ENCODE measurements at regions of chr10 and their contacts with region 1.

Region 1: GRCh38 chr10:110746254-110746826 is 102.2 kb downstream of the RBM20 start:
- DNase-seq: peak; percentile 81
- H3K4me3 ChIP-seq: no peak overlapping the region
- H3K27ac ChIP-seq: no peak overlapping the region
- H3K4me1 ChIP-seq: peaks cover 23% of the 10 kb centered on the region
- H3K27me3 ChIP-seq: peaks cover 2 to 5% of the 10 kb centered on the region in 2 experiments
- CTCF ChIP-seq: peak; percentile 63 to 71
- POLR2A ChIP-seq: no peak

Region 2: DNA sequence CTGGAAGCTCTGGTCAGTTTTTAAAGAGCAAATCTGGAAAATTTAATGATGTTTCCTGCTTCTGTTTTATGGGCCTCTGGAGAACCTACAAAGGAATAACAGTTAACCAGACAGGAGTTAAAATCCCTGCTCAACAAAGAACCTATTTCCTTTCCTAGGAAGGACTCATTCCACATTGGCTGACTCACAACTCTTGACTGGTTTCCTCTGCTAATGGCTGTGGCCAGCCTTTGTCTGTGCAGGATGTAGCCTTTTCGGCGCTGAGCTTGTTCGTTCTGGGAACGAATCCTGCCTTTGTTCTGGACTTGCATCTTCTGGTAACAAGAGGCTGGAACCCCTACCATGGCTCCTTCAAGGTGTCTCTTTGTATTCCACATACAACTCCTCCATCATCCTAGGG is 12.6 kb after region 1 on chr10:
- CTCF ChIA-PET with region 1: interaction called, 15 read pairs
- POLR2A ChIA-PET with region 1: interaction called, 3 read pairs
- dilution Hi-C with region 1: no loop called
- intact Hi-C with region 1: loop called (anchors 1 kb)
- DNase-seq: peak; percentile 89
- H3K4me3 ChIP-seq: no peak overlapping the region
- H3K27ac ChIP-seq: peak overlapping the region; percentile 64
- H3K4me1 ChIP-seq: peaks cover 18% of the 10 kb centered on the region
- H3K27me3 ChIP-seq: peaks cover 0 to 8% of the 10 kb centered on the region in 2 experiments
- CTCF ChIP-seq: no peak
- POLR2A ChIP-seq: peak; percentile 72

Region 3: DNA sequence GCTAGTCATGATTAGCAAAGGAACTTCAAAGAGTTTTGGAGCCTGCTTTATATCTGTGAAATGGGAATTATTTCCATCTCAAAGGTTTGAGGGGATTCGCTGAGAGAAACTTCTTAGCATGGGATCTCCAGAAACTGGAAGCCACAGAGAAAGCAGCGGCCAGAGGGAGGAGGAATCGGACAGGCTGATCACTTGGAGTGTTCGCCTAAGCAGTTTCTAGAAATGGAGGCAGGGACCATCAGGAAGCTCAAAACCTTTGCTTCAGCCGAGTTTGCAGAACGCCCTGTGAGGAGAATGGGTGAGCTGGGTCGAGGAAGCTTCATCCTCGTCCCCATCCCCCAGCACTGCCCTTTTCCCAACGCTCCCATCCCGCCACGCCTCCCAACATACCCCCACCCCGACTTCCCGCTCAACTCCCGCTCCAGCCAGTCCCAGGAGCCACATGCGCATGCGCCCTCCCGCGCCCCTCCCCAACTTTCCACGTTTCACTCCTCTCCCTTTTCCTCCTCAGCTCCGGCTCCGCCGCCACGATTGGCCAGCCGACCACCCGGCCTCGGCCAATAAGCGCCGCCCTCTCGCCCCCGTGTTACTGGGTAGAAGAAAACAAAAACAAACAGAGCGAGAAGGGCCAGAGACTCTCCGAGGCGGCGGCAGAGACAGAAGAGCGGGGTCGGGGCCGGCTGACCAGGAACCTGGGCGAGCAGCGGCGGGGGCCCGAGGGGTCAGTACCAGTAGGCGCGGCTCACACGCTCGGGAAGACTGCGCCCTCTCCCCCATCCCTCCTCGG is 125.2 kb after region 1 on chr10 and contains the start of gene PDCD4:
- CTCF ChIA-PET with region 1: interaction called, 10 read pairs
- POLR2A ChIA-PET with region 1: interaction called, 3 read pairs
- dilution Hi-C with region 1: no loop called
- intact Hi-C with region 1: loop called (anchors 1 kb)
- DNase-seq: peak; percentile 99
- H3K4me3 ChIP-seq: peak within 1 kb of the TSS; percentile 55 to 96 (median 85)
- H3K27ac ChIP-seq: peak within 1 kb of the TSS; percentile 57
- H3K4me1 ChIP-seq: peaks cover 21% of the 10 kb centered on the region
- H3K27me3 ChIP-seq: peaks cover 5 to 7% of the 10 kb centered on the region in 2 experiments
- CTCF ChIP-seq: no peak
- POLR2A ChIP-seq: peak; percentile 80
- total RNA-seq, gene PDCD4: 46.1 and 47.9 TPM in 2 replicates

Region 4: DNA sequence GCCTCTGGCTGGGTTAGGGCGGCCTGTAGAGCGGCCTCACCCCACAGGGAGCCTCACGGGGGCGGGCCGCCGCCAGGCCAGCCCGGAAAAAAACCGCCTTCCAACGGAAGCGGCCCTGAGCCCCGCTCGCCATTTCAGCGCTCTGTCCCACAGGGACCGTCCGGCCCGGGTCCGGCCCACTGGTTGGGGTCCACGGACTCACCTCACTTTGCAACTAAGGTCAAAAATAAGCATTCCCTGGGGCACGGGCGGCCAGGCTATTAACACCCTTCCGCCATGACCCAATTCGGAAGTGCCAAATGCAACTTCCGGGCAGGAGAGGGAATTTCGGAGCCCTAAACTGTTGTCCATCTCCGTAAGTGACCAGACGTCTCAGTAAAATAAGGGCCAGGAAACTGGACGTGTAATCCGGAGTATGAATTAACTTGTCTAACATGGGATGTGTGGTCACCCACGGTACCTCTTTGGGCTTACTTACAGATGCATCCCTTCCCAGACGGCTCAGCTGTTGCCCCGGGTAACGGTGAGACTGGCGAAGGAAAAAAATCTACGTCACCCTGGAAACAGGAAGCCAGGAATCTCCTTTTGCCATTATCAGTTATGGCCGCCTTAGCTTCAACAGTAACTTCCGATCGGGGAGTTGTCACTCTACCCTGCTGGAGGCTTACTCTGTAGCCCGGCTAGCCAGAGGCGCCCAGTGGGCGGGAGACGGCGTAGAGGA is 172.5 kb after region 1 on chr10 and contains the start of gene BBIP1:
- CTCF ChIA-PET with region 1: interaction called, 17 read pairs
- POLR2A ChIA-PET with region 1: interaction called, 10 read pairs
- dilution Hi-C with region 1: no loop called
- intact Hi-C with region 1: loop called (anchors 1 kb)
- DNase-seq: peak; percentile 100
- H3K4me3 ChIP-seq: peak within 1 kb of the TSS; percentile 89 to 94 (median 93)
- H3K27ac ChIP-seq: peak within 1 kb of the TSS; percentile 98
- H3K4me1 ChIP-seq: peaks cover 20% of the 10 kb centered on the region
- H3K27me3 ChIP-seq: no peaks in the 10 kb centered on the region
- CTCF ChIP-seq: no peak
- POLR2A ChIP-seq: peak; percentile 91
- total RNA-seq, gene BBIP1: 32.8 and 34.9 TPM in 2 replicates

Region 5: GRCh38 chr10:112115799-112116385 is 1369.6 kb after region 1 on chr10:
- CTCF ChIA-PET with region 1: interaction called, 4 read pairs
- POLR2A ChIA-PET with region 1: no interaction called
- dilution Hi-C with region 1: no loop called
- intact Hi-C with region 1: loop called (anchors 1 kb)
- DNase-seq: peak; percentile 27
- H3K4me3 ChIP-seq: no peak overlapping the region
- H3K27ac ChIP-seq: no peak overlapping the region
- H3K4me1 ChIP-seq: no peaks in the 10 kb centered on the region
- H3K27me3 ChIP-seq: no peaks in the 10 kb centered on the region
- CTCF ChIP-seq: peak; percentile 71 to 90
- POLR2A ChIP-seq: no peak

Measured in endothelial cell of umbilical vein (primary cell).